ENCODE measurements at regions of chr14 and their contacts with region 1.

Region 1: GRCh38 chr14:70972107-70972976 is 65.1 kb downstream of the PCNX1 start:
- DNase-seq: peak; percentile 55 to 79
- ATAC-seq: peak; percentile 94 to 97
- H3K4me3 ChIP-seq: no peak overlapping the region
- H3K27ac ChIP-seq: peak overlapping the region in 1 of 4 donors; percentile 0
- H3K4me1 ChIP-seq: peaks cover 0 to 4% of the 10 kb centered on the region in 2 donors
- H3K27me3 ChIP-seq: no peaks in the 10 kb centered on the region
- CTCF ChIP-seq: peak; percentile 76 to 96 (median 82)
- POLR2A ChIP-seq: no peak

Region 2: DNA sequence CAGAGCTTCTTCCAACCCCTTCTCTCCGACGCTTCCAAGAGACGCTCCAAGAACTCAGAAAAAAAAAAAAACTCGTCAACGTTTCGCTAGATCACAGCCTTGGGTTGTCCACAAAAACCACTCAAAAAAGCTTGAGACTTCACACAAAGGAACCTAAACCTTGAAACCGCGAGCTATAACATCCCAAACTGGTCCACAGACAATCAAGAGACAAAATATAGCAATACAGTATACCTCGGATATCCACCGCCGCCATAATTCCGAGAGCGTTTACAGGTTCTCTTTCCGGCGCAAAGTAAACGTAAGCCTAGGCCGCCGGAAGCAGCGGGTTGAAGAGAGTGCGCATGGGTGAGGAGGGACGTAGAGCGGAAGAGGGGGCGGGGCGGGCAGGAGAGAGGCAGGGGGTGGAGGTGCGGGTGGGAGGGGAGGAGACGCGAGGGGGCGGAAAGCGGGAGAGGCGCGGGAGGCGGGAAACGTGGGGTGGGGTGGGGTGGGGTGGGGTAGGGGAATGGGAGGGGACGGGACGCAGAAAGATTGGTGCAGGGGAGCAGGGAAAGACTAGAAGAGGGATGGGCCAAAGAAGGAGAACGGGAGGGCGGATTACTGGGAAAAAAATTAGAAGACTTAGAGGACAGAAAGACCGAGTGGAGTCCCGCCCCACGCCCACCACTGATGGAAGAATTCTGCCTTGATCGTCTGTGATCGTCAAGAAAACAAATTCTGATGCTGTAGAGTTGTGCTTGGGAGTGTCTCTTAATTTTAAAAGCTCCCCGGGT is 371.8 kb before region 1 on chr14 and contains the start of gene MED6:
- in situ Hi-C with region 1: loop called in 1 of 4 experiments (anchors 25 kb)
- intact Hi-C with region 1: no loop called
- DNase-seq: peak; percentile 87 to 91
- ATAC-seq: peak; percentile 98 to 100
- H3K4me3 ChIP-seq: peak within 1 kb of the TSS; percentile 77 to 98 (median 92)
- H3K27ac ChIP-seq: peak within 1 kb of the TSS; percentile 78 to 89 (median 80)
- H3K4me1 ChIP-seq: peaks cover 15 to 18% of the 10 kb centered on the region in 2 donors
- H3K27me3 ChIP-seq: no peaks in the 10 kb centered on the region
- CTCF ChIP-seq: no peak
- POLR2A ChIP-seq: peak in 1 of 2 donors; percentile 31
- total RNA-seq, gene MED6: 13.9 to 25.0 (median 20.2) TPM

Region 3: GRCh38 chr14:70816525-70816924 is 155.8 kb before region 1 on chr14:
- in situ Hi-C with region 1: loop called (anchors 5 to 25 kb)
- intact Hi-C with region 1: loop called (anchors 5 kb)
- DNase-seq: no peak
- ATAC-seq: no peak
- H3K4me3 ChIP-seq: no peak overlapping the region
- H3K27ac ChIP-seq: no peak overlapping the region
- H3K4me1 ChIP-seq: peaks cover 7% of the 10 kb centered on the region in 2 donors
- H3K27me3 ChIP-seq: peaks cover 2 to 9% (median 6%) of the 10 kb centered on the region in 3 donors
- CTCF ChIP-seq: no peak
- POLR2A ChIP-seq: no peak

Region 4: GRCh38 chr14:70901269-70901668 is 71.1 kb before region 1 on chr14:
- in situ Hi-C with region 1: loop called in 2 of 4 experiments (anchors 5 to 10 kb)
- intact Hi-C with region 1: no loop called
- DNase-seq: no peak
- ATAC-seq: no peak
- H3K4me3 ChIP-seq: no peak overlapping the region
- H3K27ac ChIP-seq: no peak overlapping the region
- H3K4me1 ChIP-seq: peaks cover 4 to 9% of the 10 kb centered on the region in 2 donors
- H3K27me3 ChIP-seq: no peaks in the 10 kb centered on the region
- CTCF ChIP-seq: no peak
- POLR2A ChIP-seq: no peak

Region 5: GRCh38 chr14:70919774-70920173 is 52.6 kb before region 1 on chr14:
- in situ Hi-C with region 1: loop called in 2 of 4 experiments (anchors 5 to 10 kb)
- intact Hi-C with region 1: no loop called
- DNase-seq: no peak
- ATAC-seq: no peak
- H3K4me3 ChIP-seq: no peak overlapping the region
- H3K27ac ChIP-seq: no peak overlapping the region
- H3K4me1 ChIP-seq: peaks cover 27 to 28% of the 10 kb centered on the region in 2 donors
- H3K27me3 ChIP-seq: no peaks in the 10 kb centered on the region
- CTCF ChIP-seq: no peak
- POLR2A ChIP-seq: no peak

Measured in gastrocnemius medialis (tissue), 4 donors.